Stomach (tissue), 19 donors: ENCODE measurements at regions of chr12 and their contacts with region 1.

Region 1: GRCh38 chr12:84874825-84875139 is 37.8 kb downstream of the SLC6A15 start:
- DNase-seq: no peak
- H3K4me3 ChIP-seq: no peak overlapping the region
- H3K27ac ChIP-seq: no peak overlapping the region
- H3K4me1 ChIP-seq: no peaks in the 10 kb centered on the region
- H3K27me3 ChIP-seq: no peaks in the 10 kb centered on the region
- CTCF ChIP-seq: no peak
- EP300 ChIP-seq: no peak
- POLR2A ChIP-seq: no peak

Region 2: DNA sequence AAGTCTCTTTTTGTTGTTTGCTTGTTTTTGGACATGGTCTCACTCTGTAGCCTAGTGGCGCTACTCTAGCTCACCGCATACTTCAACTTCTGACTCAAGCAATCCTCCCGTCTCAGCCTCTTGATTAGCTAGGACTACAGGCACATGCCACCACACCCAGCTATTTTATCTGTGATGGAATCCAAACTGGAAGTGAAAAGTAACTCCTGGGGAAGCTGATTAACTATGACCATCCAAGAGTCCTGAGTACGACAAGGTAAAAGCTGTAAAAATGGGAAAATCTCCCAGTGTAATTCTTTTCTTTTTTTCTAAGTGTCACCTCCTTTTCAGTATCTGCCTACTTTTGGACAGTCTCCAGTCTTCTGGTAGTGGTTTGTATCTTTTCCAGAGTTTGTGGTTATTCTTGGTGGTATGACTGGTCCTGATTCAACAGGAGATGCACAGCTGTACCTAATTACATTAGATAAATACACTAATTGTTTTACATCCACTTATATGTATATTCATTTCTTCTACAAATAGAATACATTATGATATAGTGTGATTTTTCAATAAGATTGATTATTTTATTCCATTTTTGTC is 60.0 kb before region 1 on chr12:
- intact Hi-C with region 1: no loop called
- DNase-seq: no peak
- H3K4me3 ChIP-seq: no peak overlapping the region
- H3K27ac ChIP-seq: no peak overlapping the region
- H3K4me1 ChIP-seq: no peaks in the 10 kb centered on the region
- H3K27me3 ChIP-seq: no peaks in the 10 kb centered on the region
- CTCF ChIP-seq: no peak
- EP300 ChIP-seq: no peak
- POLR2A ChIP-seq: no peak

Region 3: DNA sequence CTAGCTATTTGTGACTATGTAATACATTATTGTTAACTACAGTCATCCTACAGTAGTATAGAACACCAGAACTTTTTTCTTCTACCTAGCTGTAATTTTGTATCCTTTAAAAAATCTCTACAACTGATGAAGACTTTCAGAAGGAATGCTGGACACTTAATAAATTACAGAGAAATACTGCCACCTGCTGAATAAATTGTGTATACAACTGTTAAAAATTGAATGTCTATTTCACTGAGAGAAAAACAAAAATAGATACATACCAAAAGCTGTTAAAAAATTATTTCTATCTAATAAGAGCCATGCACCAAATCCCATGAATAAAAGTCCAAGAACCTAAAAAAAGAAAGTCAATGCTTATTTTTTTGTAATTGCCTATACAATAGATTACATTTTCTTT is 154.7 kb after region 1 on chr12:
- intact Hi-C with region 1: loop called (anchors 5 kb)
- DNase-seq: peak in 1 of 2 donors; percentile 22
- H3K4me3 ChIP-seq: no peak overlapping the region
- H3K27ac ChIP-seq: no peak overlapping the region
- H3K4me1 ChIP-seq: no peaks in the 10 kb centered on the region
- H3K27me3 ChIP-seq: no peaks in the 10 kb centered on the region
- CTCF ChIP-seq: peak in 4 of 7 experiments; percentile 12 to 46 (median 40)
- EP300 ChIP-seq: no peak
- POLR2A ChIP-seq: no peak